Activated naive CD4-positive, alpha-beta T cell treated with anti-CD3 and anti-CD28 coated beads for 36 hours (primary cell): ENCODE measurements at regions of chr6 and their contacts with region 1.

Region 1: DNA sequence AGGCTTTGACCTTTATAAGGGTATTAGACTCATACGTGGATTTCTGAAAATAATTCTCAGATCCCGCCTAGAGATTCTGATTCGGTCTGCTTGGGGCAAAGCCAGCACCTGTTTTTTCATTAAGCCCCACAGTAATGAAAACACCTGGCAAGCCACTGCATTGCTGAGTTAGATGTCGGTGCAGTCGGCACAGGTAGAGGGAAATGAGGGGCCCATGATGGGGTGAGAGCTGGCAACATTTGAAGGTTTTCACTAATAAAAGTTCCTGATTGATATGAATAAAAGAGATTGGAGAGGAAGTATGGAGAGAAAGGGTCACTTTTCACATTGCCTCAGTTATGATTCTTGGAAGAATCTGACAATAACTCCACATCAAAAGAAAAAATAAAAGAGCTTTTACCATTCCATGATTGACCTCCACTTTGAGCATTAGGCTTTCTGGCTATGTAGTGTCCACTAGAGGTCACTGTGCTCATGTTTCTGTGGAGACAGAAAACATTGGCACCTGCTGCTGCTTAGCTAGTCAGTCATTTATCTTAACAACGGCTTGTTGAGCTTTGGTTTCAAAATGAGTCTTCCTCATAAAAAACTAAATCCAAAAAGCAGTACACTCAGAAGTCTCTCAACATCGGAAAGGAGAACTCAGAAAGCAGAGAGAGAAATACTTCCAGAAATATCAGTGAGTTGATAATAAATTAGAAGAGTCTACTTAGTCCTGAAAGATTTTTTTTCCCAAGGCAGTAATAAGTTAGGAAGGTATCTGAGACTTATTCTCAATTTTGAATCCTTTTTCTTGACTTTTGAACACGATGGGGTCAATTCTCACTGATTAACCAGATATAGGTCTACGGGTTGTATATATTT is 53.3 kb upstream of the KLHL31 start:
- DNase-seq: peak; percentile 46
- H3K4me3 Mint-ChIP-seq: no peak overlapping the region
- H3K27ac Mint-ChIP-seq: no peak overlapping the region
- H3K4me1 Mint-ChIP-seq: peaks cover 7% of the 10 kb centered on the region
- H3K27me3 Mint-ChIP-seq: peaks cover 8% of the 10 kb centered on the region

Region 2: DNA sequence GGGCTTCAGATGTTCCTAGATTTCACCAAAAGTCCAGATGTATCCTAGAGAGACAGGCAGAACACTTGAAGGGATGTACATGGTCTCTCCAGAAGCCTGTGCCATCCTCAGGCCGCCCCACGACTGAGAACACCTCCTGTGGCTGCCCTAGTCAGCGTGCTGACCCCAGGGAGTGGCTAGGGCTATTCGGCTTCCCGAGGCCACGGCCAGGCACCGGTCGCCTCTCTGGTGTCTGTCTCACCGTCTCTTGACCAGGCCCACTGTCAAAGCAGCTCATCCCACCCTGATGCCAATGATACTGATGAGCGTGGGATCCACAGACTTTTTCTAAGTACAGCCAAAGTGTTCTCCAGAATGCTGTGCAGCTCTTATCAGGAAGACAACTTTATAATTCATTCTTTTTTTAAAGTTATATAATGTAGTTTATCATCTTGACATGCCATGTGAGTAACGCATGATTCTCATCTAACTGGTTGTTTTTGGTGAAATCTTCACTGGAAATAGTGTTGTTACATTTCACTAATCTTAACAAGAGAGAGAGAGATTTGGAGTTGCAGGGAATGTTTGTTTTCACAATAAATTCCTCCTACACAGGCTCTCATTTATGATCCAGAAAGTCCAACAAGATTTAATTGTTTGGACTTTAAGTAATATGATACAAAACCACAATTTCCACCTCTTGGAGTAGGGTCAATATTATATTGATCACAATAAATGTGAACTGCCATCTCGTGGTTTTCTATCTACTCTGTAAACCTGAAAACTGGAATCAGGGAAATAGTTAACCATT is 11.5 kb before region 1 on chr6:
- CTCF ChIA-PET with region 1: interaction called, 42 read pairs
- intact Hi-C with region 1: no loop called
- DNase-seq: no peak
- H3K4me3 Mint-ChIP-seq: no peak overlapping the region
- H3K27ac Mint-ChIP-seq: no peak overlapping the region
- H3K4me1 Mint-ChIP-seq: no peaks in the 10 kb centered on the region
- H3K27me3 Mint-ChIP-seq: peaks cover 7% of the 10 kb centered on the region

Region 3: GRCh38 chr6:53734473-53735299 is 15.9 kb after region 1 on chr6:
- CTCF ChIA-PET with region 1: interaction called, 52 read pairs
- intact Hi-C with region 1: no loop called
- DNase-seq: peak; percentile 48
- H3K4me3 Mint-ChIP-seq: no peak overlapping the region
- H3K27ac Mint-ChIP-seq: no peak overlapping the region
- H3K4me1 Mint-ChIP-seq: peaks cover 15% of the 10 kb centered on the region
- H3K27me3 Mint-ChIP-seq: no peaks in the 10 kb centered on the region